SK-N-SH (cell line): ENCODE measurements at regions of chr3 and their contacts with region 1.

Region 1: GRCh38 chr3:66816090-66816761 is 181.9 kb upstream of the KBTBD8 start:
- DNase-seq: peak; percentile 46
- H3K4me3 ChIP-seq: no peak overlapping the region
- H3K27ac ChIP-seq: no peak overlapping the region
- H3K4me1 ChIP-seq: no peaks in the 10 kb centered on the region
- H3K27me3 ChIP-seq: no peaks in the 10 kb centered on the region; the same call in 1 of the 2 replicates
- CTCF ChIP-seq: peak; percentile 66
- EP300 ChIP-seq: no peak
- RAD21 ChIP-seq: peak; percentile 80

Region 2: DNA sequence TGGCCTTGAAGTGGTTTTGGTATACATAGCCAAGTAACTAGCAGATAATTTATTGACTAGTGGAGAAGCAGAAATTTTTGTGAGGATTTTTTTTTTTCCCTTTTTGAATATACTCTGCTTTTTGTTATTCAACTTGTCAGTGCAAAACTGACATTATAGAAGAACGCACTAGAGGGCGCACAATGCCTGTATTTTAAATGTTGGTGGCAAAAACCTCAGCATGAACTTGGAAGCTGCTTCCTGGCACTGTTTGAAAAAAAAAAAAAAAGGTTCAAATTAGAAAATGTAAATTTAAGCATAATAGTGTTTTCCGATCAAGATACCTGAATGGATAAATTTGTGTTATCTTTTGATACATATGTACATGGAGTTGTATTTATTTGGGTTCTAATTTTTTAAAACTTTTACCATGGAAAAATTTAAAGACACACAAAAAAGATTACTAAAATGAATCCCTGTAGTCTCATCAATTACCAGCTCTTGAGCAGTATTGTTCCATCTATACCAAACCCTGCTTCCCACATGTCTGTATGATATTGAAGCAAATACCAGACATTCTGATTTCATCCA is 539.4 kb before region 1 on chr3:
- CTCF ChIA-PET with region 1: interaction called, 27 read pairs
- POLR2A ChIA-PET with region 1: no interaction called
- DNase-seq: peak; percentile 46
- H3K4me3 ChIP-seq: no peak overlapping the region
- H3K27ac ChIP-seq: no peak overlapping the region
- H3K4me1 ChIP-seq: no peaks in the 10 kb centered on the region
- H3K27me3 ChIP-seq: no peaks in the 10 kb centered on the region
- CTCF ChIP-seq: peak; percentile 83
- EP300 ChIP-seq: no peak
- RAD21 ChIP-seq: peak; percentile 91

Region 3: GRCh38 chr3:66722675-66723074 is 93.6 kb before region 1 on chr3:
- CTCF ChIA-PET with region 1: no interaction called
- POLR2A ChIA-PET with region 1: no interaction called
- DNase-seq: no peak
- H3K4me3 ChIP-seq: no peak overlapping the region
- H3K27ac ChIP-seq: no peak overlapping the region
- H3K4me1 ChIP-seq: no peaks in the 10 kb centered on the region
- H3K27me3 ChIP-seq: no peaks in the 10 kb centered on the region
- CTCF ChIP-seq: no peak
- EP300 ChIP-seq: no peak
- RAD21 ChIP-seq: no peak

Region 4: GRCh38 chr3:66795365-66795764 is 20.9 kb before region 1 on chr3:
- CTCF ChIA-PET with region 1: interaction called, 10 read pairs
- POLR2A ChIA-PET with region 1: no interaction called
- DNase-seq: no peak
- H3K4me3 ChIP-seq: no peak overlapping the region
- H3K27ac ChIP-seq: no peak overlapping the region
- H3K4me1 ChIP-seq: no peaks in the 10 kb centered on the region
- H3K27me3 ChIP-seq: no peaks in the 10 kb centered on the region
- CTCF ChIP-seq: no peak
- EP300 ChIP-seq: no peak
- RAD21 ChIP-seq: no peak

Region 5: DNA sequence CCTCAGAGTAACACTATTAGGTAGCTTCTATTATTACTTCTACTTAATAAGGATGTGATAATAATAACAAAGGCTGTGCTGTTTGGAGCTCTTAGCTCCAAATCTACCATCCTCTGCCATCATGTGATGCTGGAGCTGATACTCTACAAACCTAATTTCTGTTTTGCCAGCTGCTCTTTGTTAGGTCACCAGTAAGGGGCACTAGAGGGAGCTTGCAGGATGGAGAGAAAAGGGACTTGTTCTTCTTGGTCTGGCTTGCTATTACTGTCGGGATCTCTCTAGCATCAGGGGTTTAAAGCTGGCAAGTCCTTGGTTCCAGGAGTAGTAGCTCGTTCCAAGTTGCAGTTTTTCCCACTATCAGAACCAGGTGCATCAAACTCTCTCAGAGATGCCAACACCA is 13.0 kb before region 1 on chr3:
- CTCF ChIA-PET with region 1: interaction called, 28 read pairs
- POLR2A ChIA-PET with region 1: no interaction called
- DNase-seq: no peak
- H3K4me3 ChIP-seq: no peak overlapping the region; a peak in 1 of 4 replicates
- H3K27ac ChIP-seq: no peak overlapping the region
- H3K4me1 ChIP-seq: no peaks in the 10 kb centered on the region
- H3K27me3 ChIP-seq: no peaks in the 10 kb centered on the region
- CTCF ChIP-seq: no peak; the same call in 1 of the 2 replicates
- EP300 ChIP-seq: no peak
- RAD21 ChIP-seq: no peak

Region 6: GRCh38 chr3:66948041-66948440 is 131.8 kb after region 1 on chr3:
- CTCF ChIA-PET with region 1: no interaction called
- POLR2A ChIA-PET with region 1: no interaction called
- DNase-seq: no peak
- H3K4me3 ChIP-seq: no peak overlapping the region
- H3K27ac ChIP-seq: no peak overlapping the region
- H3K4me1 ChIP-seq: no peaks in the 10 kb centered on the region
- H3K27me3 ChIP-seq: no peaks in the 10 kb centered on the region
- CTCF ChIP-seq: no peak
- EP300 ChIP-seq: no peak
- RAD21 ChIP-seq: no peak